Activated T-helper 1 cell treated with anti-CD3 and anti-CD28 coated beads, Interleukin-12 subunit alpha, Interleukin-12 subunit beta, Interleukin-2, Interleukin-4 antibody, amounts not matched to agents 30 ng/mL and 10 ng/mL and 1 ng/mL, durations not matched to agents 14 hours and 24 hours and 36 hours (primary cell): ENCODE measurements at regions of chr6 and their contacts with region 1.

Region 1: GRCh38 chr6:16452348-16452747 is 214.0 kb downstream of the GMPR start:
- DNase-seq: no peak
- H3K4me3 Mint-ChIP-seq: no peak overlapping the region
- H3K27ac Mint-ChIP-seq: no peak overlapping the region
- H3K4me1 Mint-ChIP-seq: peaks cover 37% of the 10 kb centered on the region
- H3K27me3 Mint-ChIP-seq: no peaks in the 10 kb centered on the region

Region 2: DNA sequence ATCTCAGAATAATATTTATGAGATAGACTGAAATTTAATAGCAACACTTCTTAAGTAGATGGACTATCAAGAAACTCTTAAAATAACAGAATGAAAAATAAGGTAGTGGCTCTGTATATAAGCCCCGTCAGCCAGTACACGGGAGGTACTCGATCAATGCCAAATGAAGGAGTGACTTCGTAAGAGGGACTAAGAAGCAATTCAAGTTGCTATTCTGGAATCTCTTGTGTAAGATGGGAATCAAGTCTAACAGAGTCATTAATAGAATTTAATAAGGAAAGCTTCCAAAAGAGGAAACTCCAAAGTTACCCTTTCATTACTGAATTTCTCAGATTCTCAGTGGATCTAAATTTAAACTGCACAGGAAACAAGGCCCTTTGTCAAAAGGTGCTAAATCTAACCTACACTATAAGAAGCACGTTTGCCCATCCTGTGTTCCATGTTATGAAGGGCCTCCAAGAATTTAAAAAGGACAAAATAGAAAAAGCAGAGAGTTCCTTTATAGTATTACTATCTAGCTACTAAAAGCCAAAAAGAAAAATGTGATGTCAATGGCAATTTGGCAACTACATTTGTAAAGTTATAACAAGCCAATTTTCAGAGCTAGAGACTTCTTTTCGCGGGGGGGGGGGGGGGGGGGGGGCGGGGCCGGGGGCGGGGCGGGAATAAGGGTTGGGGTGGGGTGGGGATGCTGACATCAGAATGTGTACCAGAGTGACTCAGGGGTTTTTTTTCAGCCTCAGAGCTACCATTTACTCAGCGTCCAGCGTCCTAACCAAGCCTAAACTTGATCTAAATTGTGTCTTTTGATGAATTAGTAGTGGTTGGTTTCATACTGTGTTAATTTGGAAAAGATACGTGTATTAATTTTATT is 13.4 kb before region 1 on chr6:
- intact Hi-C with region 1: loop called (anchors 1 kb)
- DNase-seq: no peak
- H3K4me3 Mint-ChIP-seq: peak overlapping the region; percentile 51
- H3K27ac Mint-ChIP-seq: peak overlapping the region; percentile 79
- H3K4me1 Mint-ChIP-seq: peaks cover 81% of the 10 kb centered on the region
- H3K27me3 Mint-ChIP-seq: no peaks in the 10 kb centered on the region